Panc1 (cell line): ENCODE measurements at regions of chr11 and their contacts with region 1.

Region 1: GRCh38 chr11:93234602-93235207 is 36.9 kb upstream of the SLC36A4 start:
- DNase-seq: peak; percentile 68
- ATAC-seq: peak; percentile 99
- H3K4me3 ChIP-seq: no peak overlapping the region
- H3K27ac ChIP-seq: no peak overlapping the region
- H3K4me1 ChIP-seq: no peaks in the 10 kb centered on the region
- H3K27me3 ChIP-seq: peaks cover 21% of the 10 kb centered on the region
- CTCF ChIP-seq: peak; percentile 95

Region 2: GRCh38 chr11:93295921-93296575 is 61.3 kb after region 1 on chr11:
- CTCF ChIA-PET with region 1: no interaction called
- POLR2A ChIA-PET with region 1: no interaction called
- in situ Hi-C with region 1: no loop called
- intact Hi-C with region 1: loop called (anchors 10 kb)
- DNase-seq: no peak
- ATAC-seq: no peak
- H3K4me3 ChIP-seq: no peak overlapping the region
- H3K27ac ChIP-seq: no peak overlapping the region
- H3K4me1 ChIP-seq: no peaks in the 10 kb centered on the region
- H3K27me3 ChIP-seq: peaks cover 3% of the 10 kb centered on the region; the same call in 1 of the 2 replicates
- CTCF ChIP-seq: no peak

Region 3: DNA sequence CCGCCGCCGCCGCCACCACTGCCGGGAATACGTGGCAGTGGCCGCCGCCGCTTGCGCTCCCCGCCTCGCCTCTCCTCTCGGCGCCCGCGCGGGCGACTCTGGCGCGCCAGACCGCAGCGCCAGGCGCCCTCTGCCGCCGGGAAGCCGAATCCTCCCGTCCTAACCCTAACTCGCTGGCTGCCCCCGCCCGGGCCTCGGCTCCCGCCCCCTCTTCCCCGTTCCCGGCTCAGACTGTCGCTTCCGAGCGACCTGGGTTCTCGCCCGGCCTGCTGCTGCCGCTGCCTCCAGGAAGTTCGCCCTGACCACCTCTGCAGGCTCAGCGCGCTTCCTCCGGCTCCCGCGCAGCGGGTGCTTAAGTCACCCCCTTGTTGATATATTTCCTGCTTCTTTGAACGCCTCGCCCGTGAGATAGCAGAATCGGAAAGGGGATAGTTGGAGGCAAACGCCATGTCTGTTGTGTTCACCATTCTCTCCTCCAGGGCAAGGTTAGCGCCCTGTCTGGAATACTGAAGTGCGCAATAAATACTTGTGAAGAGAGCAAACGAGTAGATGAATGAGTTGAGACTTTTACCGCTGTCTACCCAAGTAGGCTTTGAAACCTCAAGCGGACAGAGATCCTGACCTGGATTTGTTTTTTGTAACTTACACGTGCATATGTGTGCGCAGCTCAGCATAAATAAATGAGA is 308.7 kb after region 1 on chr11 and contains the start of gene SMCO4:
- CTCF ChIA-PET with region 1: interaction called, 5 read pairs
- POLR2A ChIA-PET with region 1: no interaction called
- in situ Hi-C with region 1: no loop called
- intact Hi-C with region 1: loop called (anchors 2 kb)
- DNase-seq: peak; percentile 35
- ATAC-seq: peak; percentile 97
- H3K4me3 ChIP-seq: peak within 1 kb of the TSS; percentile 65 to 91
- H3K27ac ChIP-seq: peak within 1 kb of the TSS; percentile 70
- H3K4me1 ChIP-seq: peaks cover 14% of the 10 kb centered on the region
- H3K27me3 ChIP-seq: peaks cover 16% of the 10 kb centered on the region
- CTCF ChIP-seq: peak; percentile 93
- total RNA-seq, gene SMCO4: 14.1 TPM

Region 4: DNA sequence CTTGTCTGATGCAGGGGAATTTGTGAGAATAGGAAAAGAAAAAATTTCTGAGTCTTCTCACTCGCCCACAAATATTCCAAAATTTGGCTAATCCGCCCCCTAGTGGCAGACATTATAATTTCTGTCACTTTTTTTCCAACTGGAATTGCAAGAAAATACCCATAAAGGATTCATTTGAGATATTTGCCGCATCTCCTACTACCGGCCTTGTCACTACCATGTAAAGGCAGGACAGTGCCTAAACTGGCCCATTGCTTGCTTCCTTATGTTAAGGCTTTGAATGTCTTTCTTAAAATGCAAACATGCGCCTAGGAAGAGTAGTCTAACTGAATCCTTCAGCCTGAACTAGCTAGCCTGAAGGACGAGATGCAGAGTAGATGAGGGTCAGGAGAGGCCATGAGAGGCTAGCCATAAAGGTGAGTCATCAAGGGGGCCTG is 417.5 kb after region 1 on chr11:
- CTCF ChIA-PET with region 1: interaction called, 4 read pairs
- POLR2A ChIA-PET with region 1: no interaction called
- in situ Hi-C with region 1: no loop called
- intact Hi-C with region 1: loop called (anchors 1 kb)
- DNase-seq: no peak
- ATAC-seq: peak; percentile 67
- H3K4me3 ChIP-seq: 0 out of 4 replicates have a peak overlapping the region, but pooled peaks of 1 of the 2 experiments have one; percentile 6
- H3K27ac ChIP-seq: no peak overlapping the region
- H3K4me1 ChIP-seq: peaks cover 6% of the 10 kb centered on the region; the same call in 1 of the 2 replicates
- H3K27me3 ChIP-seq: peaks cover 33% of the 10 kb centered on the region
- CTCF ChIP-seq: peak; percentile 90

Region 5: GRCh38 chr11:94504689-94505293 is 1270.1 kb after region 1 on chr11:
- CTCF ChIA-PET with region 1: no interaction called
- POLR2A ChIA-PET with region 1: no interaction called
- in situ Hi-C with region 1: no loop called
- intact Hi-C with region 1: loop called (anchors 10 kb)
- DNase-seq: no peak
- ATAC-seq: peak; percentile 86
- H3K4me3 ChIP-seq: no peak overlapping the region
- H3K27ac ChIP-seq: no peak overlapping the region
- H3K4me1 ChIP-seq: no peaks in the 10 kb centered on the region
- H3K27me3 ChIP-seq: no peaks in the 10 kb centered on the region
- CTCF ChIP-seq: peak; percentile 77; the same call in 1 of the 2 replicates